ENCODE measurements at regions of chr1 and their contacts with region 1.

Region 1: GRCh38 chr1:21232044-21232443 is 55.3 kb upstream of the EIF4G3 start:
- DNase-seq: peak in 3 of 5 donors; percentile 9 to 37 (median 22)
- H3K4me3 ChIP-seq: no peak overlapping the region
- H3K4me3 Mint-ChIP-seq: no peak overlapping the region
- H3K27ac ChIP-seq: no peak overlapping the region
- H3K27ac Mint-ChIP-seq: peak overlapping the region in 1 of 8 donors; percentile 31
- H3K4me1 ChIP-seq: no peaks in the 10 kb centered on the region
- H3K4me1 Mint-ChIP-seq: no peaks in the 10 kb centered on the region
- H3K27me3 ChIP-seq: no peaks in the 10 kb centered on the region
- H3K27me3 Mint-ChIP-seq: no peaks in the 10 kb centered on the region

Region 2: DNA sequence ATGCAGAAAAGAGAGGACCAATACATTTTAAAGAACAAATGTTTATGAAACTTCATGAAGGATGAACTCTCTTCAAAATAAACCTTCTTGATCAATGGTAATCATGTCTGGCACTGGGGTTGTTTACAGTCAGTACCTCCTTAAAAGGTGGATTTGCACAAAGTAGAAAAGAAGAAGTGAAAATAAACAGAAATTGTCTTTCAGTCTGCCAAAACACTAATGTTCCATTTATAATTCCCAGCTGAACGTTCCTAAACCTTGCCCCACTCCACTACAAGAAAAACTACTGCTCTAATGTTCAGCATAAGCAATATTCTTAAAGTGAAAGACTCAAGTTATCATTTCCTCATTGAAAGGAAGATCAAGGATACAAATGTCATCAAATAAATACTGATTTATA is 141.6 kb before region 1 on chr1:
- CTCF ChIA-PET with region 1: no interaction called
- POLR2A ChIA-PET with region 1: no interaction called
- DNase-seq: no peak
- H3K4me3 ChIP-seq: no peak overlapping the region
- H3K4me3 Mint-ChIP-seq: no peak overlapping the region
- H3K27ac ChIP-seq: no peak overlapping the region
- H3K27ac Mint-ChIP-seq: peak overlapping the region in 2 of 8 donors; percentile 14 to 42
- H3K4me1 ChIP-seq: no peaks in the 10 kb centered on the region
- H3K4me1 Mint-ChIP-seq: peaks cover 3 to 7% (median 7%) of the 10 kb centered on the region in 3 donors
- H3K27me3 ChIP-seq: no peaks in the 10 kb centered on the region
- H3K27me3 Mint-ChIP-seq: no peaks in the 10 kb centered on the region

Region 3: GRCh38 chr1:21216835-21217811 is 14.9 kb before region 1 on chr1:
- CTCF ChIA-PET with region 1: interaction called, 35 read pairs
- POLR2A ChIA-PET with region 1: no interaction called
- DNase-seq: peak; percentile 41 to 74 (median 44)
- H3K4me3 ChIP-seq: no peak overlapping the region
- H3K4me3 Mint-ChIP-seq: no peak overlapping the region
- H3K27ac ChIP-seq: no peak overlapping the region
- H3K27ac Mint-ChIP-seq: peak overlapping the region in 2 of 8 donors; percentile 17 to 35
- H3K4me1 ChIP-seq: no peaks in the 10 kb centered on the region
- H3K4me1 Mint-ChIP-seq: peaks cover 0 to 3% (median 0%) of the 10 kb centered on the region in 3 donors
- H3K27me3 ChIP-seq: no peaks in the 10 kb centered on the region
- H3K27me3 Mint-ChIP-seq: no peaks in the 10 kb centered on the region

Region 4: GRCh38 chr1:21244986-21245687 is 13.1 kb after region 1 on chr1:
- CTCF ChIA-PET with region 1: interaction called, 17 read pairs
- POLR2A ChIA-PET with region 1: no interaction called
- DNase-seq: no peak
- H3K4me3 ChIP-seq: no peak overlapping the region
- H3K4me3 Mint-ChIP-seq: no peak overlapping the region
- H3K27ac ChIP-seq: no peak overlapping the region
- H3K27ac Mint-ChIP-seq: peak overlapping the region in 1 of 8 donors; percentile 52
- H3K4me1 ChIP-seq: no peaks in the 10 kb centered on the region
- H3K4me1 Mint-ChIP-seq: peaks cover 0 to 2% (median 0%) of the 10 kb centered on the region in 3 donors
- H3K27me3 ChIP-seq: no peaks in the 10 kb centered on the region
- H3K27me3 Mint-ChIP-seq: no peaks in the 10 kb centered on the region

Measured in CD8-positive, alpha-beta memory T cell (primary cell).